Activated naive CD4-positive, alpha-beta T cell treated with anti-CD3 and anti-CD28 coated beads, Interleukin-2, amount 10 ng/mL, durations not matched to agents 7 days and 5 days (primary cell): ENCODE measurements at regions of chr1 and their contacts with region 1.

Region 1: DNA sequence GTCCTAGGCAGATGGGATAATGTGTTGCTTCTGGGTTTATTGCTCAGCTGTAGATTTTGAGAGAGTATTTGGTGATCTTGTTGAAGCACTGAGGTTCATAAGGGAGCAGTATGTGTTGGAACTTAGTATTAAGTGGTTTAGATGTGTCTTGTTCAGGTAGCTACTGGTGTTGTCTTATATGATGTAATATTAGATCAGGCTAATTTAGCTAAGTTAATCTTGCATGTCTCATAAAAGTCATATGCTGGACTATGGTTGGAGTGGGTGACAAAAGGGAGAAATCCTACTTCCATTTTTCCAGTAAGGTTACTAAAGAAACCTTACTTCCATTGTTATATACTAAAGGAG is 196.4 kb downstream of the CLEC20A start:
- DNase-seq: no peak
- H3K4me3 Mint-ChIP-seq: no peak overlapping the region
- H3K27ac Mint-ChIP-seq: no peak overlapping the region
- H3K4me1 Mint-ChIP-seq: no peaks in the 10 kb centered on the region
- H3K27me3 Mint-ChIP-seq: peaks cover 4% of the 10 kb centered on the region

Region 2: DNA sequence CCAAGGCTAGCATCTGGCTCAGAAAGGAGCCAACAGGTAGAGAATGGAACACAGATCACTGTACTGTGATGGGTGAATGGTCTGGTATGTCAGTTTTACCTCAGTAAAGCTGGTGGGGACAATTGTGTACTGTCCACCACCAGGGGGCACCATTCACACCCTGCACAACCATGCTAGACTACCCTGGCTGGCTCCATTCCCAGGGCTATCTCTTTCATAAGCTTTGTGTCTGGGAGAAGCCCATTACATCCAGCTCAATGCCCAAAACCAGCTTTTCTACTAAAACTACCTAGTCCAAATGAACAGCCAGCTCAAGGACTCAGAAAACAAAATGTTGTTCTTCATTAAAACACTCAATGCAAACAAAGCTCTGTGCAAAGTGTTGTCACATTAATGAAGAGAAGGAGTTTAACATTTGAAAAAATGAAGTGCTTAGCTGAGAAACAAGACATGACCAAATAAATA is 268.4 kb before region 1 on chr1:
- CTCF ChIA-PET with region 1: no interaction called
- DNase-seq: peak; percentile 32
- H3K4me3 Mint-ChIP-seq: no peak overlapping the region
- H3K27ac Mint-ChIP-seq: no peak overlapping the region
- H3K4me1 Mint-ChIP-seq: no peaks in the 10 kb centered on the region
- H3K27me3 Mint-ChIP-seq: peaks cover 8% of the 10 kb centered on the region

Region 3: GRCh38 chr1:178278916-178279686 is 21.2 kb before region 1 on chr1:
- CTCF ChIA-PET with region 1: no interaction called
- DNase-seq: no peak
- H3K4me3 Mint-ChIP-seq: no peak overlapping the region
- H3K27ac Mint-ChIP-seq: no peak overlapping the region
- H3K4me1 Mint-ChIP-seq: no peaks in the 10 kb centered on the region
- H3K27me3 Mint-ChIP-seq: no peaks in the 10 kb centered on the region

Region 4: GRCh38 chr1:178310685-178311105 is 10.4 kb after region 1 on chr1:
- CTCF ChIA-PET with region 1: interaction called, 10 read pairs
- DNase-seq: no peak
- H3K4me3 Mint-ChIP-seq: no peak overlapping the region
- H3K27ac Mint-ChIP-seq: no peak overlapping the region
- H3K4me1 Mint-ChIP-seq: no peaks in the 10 kb centered on the region
- H3K27me3 Mint-ChIP-seq: no peaks in the 10 kb centered on the region

Region 5: GRCh38 chr1:178341261-178341956 is 41.1 kb after region 1 on chr1:
- CTCF ChIA-PET with region 1: no interaction called
- DNase-seq: no peak
- H3K4me3 Mint-ChIP-seq: no peak overlapping the region
- H3K27ac Mint-ChIP-seq: no peak overlapping the region
- H3K4me1 Mint-ChIP-seq: no peaks in the 10 kb centered on the region
- H3K27me3 Mint-ChIP-seq: no peaks in the 10 kb centered on the region

Region 6: DNA sequence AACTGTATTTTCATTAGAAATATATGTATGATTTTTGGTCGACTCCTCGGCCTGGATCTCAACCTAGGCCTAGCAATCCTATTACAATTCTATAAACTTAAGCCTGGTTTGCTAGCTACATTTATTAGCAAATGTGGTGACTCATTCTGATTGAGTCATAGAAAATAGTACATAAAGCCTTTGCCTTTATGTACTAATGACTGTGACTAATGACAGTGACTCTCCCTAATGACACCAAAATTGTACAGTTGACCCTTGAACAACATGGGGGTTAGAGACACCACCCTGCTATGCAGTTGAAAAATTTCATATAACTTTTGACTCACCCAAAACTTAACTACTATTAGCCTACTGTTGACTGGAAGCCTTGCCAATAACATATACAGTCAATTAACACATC is 117.5 kb after region 1 on chr1:
- CTCF ChIA-PET with region 1: no interaction called
- DNase-seq: no peak
- H3K4me3 Mint-ChIP-seq: no peak overlapping the region
- H3K27ac Mint-ChIP-seq: no peak overlapping the region
- H3K4me1 Mint-ChIP-seq: no peaks in the 10 kb centered on the region
- H3K27me3 Mint-ChIP-seq: no peaks in the 10 kb centered on the region

Region 7: GRCh38 chr1:178501705-178502329 is 201.5 kb after region 1 on chr1:
- CTCF ChIA-PET with region 1: interaction called, 10 read pairs
- DNase-seq: peak; percentile 73
- H3K4me3 Mint-ChIP-seq: no peak overlapping the region
- H3K27ac Mint-ChIP-seq: no peak overlapping the region
- H3K4me1 Mint-ChIP-seq: no peaks in the 10 kb centered on the region
- H3K27me3 Mint-ChIP-seq: peaks cover 4% of the 10 kb centered on the region